Heart right ventricle (tissue), 16 donors: ENCODE measurements at regions of chr6 and their contacts with region 1.

Region 1: DNA sequence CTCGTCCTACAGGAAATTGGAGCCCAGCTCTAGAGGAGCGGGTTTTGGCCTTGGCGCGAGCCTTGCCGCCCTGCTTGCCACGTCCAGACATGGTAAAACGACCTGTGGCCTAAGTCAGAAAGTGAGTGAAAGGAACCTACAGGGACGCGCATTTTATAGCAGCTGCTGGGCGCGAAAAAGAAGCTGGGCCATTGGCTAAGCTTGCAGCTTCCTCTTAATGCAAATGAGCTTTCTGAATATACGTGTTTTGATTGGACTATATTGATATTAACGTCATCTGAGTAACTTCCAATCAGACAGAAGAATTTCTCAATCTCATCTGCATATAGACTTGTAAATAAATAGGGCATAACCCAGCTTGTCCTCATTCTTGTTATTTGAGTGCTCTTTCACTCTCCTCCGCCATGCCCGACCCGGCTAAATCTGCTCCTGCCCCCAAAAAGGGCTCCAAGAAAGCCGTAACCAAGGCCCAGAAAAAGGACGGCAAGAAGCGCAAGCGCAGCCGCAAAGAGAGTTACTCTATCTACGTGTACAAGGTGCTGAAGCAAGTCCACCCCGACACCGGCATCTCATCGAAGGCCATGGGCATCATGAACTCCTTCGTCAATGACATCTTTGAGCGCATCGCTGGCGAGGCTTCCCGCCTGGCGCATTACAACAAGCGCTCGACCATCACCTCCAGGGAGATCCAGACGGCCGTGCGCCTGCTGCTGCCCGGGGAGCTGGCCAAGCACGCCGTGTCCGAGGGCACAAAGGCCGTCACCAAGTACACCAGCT is 18.9 kb downstream of the OR2B2 start:
- DNase-seq: peak; percentile 56 to 77
- ATAC-seq: peak; percentile 39 to 69 (median 52)
- H3K4me3 ChIP-seq: peak overlapping the region; percentile 26 to 93 (median 64)
- H3K27ac ChIP-seq: peak overlapping the region in 7 of 10 donors; percentile 17 to 92 (median 38)
- H3K4me1 ChIP-seq: peaks cover 0 to 49% (median 28%) of the 10 kb centered on the region in 9 donors
- H3K27me3 ChIP-seq: peaks cover 0 to 48% (median 45%) of the 10 kb centered on the region in 7 donors
- CTCF ChIP-seq: no peak

Region 2: DNA sequence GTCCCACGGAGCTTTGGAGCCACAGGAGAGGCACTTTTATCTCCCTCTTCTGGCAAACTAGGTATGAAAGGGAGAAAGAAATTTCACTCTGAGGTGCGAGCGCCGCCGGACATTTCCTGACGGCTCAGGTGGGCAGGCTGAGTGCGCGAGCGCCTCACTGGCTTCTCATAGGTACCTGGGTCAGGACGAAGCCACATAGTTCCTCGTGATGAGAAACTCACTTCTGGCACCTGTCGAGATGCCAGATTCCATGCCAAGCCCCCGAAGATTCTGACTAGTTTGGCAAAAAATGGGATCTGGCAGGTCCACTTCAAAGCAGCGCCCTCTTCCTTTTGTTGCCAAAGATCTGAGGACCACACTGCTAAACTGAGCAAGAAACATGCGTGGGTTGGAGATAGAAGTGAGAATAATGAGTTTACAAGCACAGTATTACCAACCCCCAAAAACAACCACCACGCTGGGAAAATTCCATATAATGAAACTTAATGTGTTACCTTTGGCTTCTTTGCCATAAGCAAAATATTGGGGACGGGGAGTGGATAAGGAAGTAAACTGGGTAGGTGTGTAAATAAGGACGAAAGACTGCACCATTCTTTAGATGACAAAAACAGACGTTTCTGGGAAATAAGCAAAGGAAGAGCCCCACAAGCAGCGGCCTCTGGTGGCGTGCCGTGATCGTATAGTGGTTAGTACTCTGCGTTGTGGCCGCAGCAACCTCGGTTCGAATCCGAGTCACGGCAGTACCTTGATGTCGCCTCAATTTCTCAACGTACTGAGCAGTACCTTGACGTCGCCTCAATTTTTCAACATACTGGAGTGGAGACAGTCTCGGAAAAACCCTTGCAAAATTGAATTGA is 735.6 kb before region 1 on chr6:
- intact Hi-C with region 1: loop called in 2 of 10 experiments (anchors 10 kb)
- DNase-seq: peak; percentile 62 to 65
- ATAC-seq: peak in 7 of 8 donors; percentile 64 to 92 (median 80)
- H3K4me3 ChIP-seq: peak overlapping the region; percentile 5 to 54 (median 44)
- H3K27ac ChIP-seq: peak overlapping the region in 1 of 10 donors; percentile 11
- H3K4me1 ChIP-seq: peaks cover 0 to 17% (median 9%) of the 10 kb centered on the region in 9 donors
- H3K27me3 ChIP-seq: peaks cover 0 to 18% (median 0%) of the 10 kb centered on the region in 7 donors
- CTCF ChIP-seq: peak in 8 of 9 donors; percentile 7 to 75 (median 60)

Region 3: GRCh38 chr6:27472617-27473400 is 420.4 kb before region 1 on chr6 and contains the start of gene ZNF184:
- intact Hi-C with region 1: loop called in 5 of 10 experiments (anchors 2 to 10 kb)
- DNase-seq: peak; percentile 95 to 96
- ATAC-seq: peak; percentile 99 to 100 (median 100)
- H3K4me3 ChIP-seq: peak within 1 kb of the TSS; percentile 51 to 97 (median 80)
- H3K27ac ChIP-seq: peak within 1 kb of the TSS in 9 of 10 donors; percentile 81 to 93 (median 90)
- H3K4me1 ChIP-seq: peaks cover under 1 to 31% (median 17%) of the 10 kb centered on the region in 9 donors
- H3K27me3 ChIP-seq: no peaks in the 10 kb centered on the region
- CTCF ChIP-seq: peak in 3 of 9 donors; percentile 7 to 30 (median 17)
- total RNA-seq, gene ZNF184: 2.1 to 5.5 (median 3.4) TPM

Region 4: DNA sequence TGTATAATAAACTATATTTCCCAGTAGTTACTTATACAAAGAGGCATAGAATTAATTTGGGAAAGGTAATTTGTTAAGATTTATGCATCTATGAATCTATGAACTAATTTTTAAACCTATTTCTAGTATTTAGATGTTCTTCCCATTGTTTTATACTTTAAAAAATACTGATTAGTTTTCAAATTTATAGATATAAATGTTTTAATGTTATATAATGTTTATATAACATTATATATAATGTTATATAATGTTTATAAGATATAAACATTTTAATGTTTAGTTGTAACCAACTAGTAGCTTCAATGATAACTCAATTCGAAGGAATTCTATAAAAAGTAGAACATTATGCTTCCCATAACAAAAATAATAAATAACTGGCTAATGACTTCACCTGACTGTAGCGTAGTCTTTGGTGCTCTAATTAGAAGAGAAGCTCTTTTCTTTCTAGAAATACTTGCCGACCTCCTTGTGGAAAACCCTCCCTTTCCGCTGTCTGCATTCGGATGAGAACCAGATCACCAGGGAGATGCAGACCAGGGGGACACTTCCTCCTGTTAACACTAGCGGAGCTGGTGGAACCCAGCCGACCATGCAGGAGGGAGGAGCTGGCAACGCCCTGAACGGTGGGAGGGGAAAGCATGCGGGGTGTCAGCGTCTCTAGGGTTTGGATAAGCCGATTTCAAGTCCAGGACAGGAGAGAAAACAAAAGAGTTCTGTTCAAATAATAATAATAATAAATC is 139.4 kb before region 1 on chr6:
- intact Hi-C with region 1: loop called in 1 of 10 experiments (anchors 5 kb)
- DNase-seq: peak; percentile 52 to 53
- ATAC-seq: peak in 3 of 8 donors; percentile 40 to 71 (median 65)
- H3K4me3 ChIP-seq: peak overlapping the region in 9 of 10 donors; percentile 34 to 86 (median 71)
- H3K27ac ChIP-seq: no peak overlapping the region
- H3K4me1 ChIP-seq: peaks cover 0 to 17% (median 5%) of the 10 kb centered on the region in 9 donors
- H3K27me3 ChIP-seq: peaks cover 6 to 39% (median 32%) of the 10 kb centered on the region in 7 donors
- CTCF ChIP-seq: no peak

Region 5: DNA sequence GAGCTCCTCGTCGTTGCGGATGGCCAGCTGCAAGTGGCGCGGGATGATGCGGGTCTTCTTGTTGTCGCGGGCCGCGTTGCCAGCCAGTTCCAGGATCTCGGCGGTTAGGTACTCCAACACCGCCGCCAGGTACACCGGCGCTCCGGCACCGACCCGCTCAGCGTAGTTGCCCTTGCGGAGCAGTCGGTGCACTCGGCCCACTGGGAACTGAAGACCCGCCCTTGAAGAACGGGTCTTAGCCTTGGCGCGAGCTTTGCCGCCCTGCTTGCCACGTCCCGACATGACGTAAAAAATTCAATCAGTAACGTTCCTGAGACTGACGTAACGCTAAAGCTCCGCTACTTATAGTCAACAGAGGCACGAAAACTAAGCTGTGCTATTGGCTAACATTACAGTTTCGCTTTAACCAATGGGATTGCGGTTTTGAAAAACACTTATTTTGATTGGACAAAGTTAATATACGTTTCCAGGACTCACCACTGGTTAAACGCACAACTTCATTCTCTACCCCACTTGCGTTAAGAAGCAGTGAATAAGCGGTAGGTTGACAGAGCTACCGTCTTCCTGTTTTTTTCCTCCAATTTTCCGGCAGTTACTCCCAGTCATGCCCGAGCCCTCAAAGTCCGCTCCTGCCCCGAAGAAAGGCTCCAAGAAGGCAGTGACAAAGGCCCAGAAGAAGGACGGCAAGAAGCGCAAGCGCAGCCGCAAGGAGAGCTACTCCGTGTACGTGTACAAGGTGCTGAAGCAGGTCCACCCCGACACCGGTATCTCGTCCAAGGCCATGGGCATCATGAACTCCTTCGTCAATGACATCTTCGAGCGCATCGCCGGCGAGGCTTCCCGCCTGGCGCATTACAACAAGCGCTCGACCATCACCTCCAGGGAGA is 54.9 kb before region 1 on chr6:
- intact Hi-C with region 1: loop called in 5 of 10 experiments (anchors 2 to 5 kb)
- DNase-seq: peak; percentile 61 to 80
- ATAC-seq: peak; percentile 92 to 96 (median 95)
- H3K4me3 ChIP-seq: peak overlapping the region; percentile 61 to 95 (median 82)
- H3K27ac ChIP-seq: peak overlapping the region; percentile 86 to 98 (median 96)
- H3K4me1 ChIP-seq: peaks cover 0 to 39% (median 31%) of the 10 kb centered on the region in 9 donors
- H3K27me3 ChIP-seq: no peaks in the 10 kb centered on the region
- CTCF ChIP-seq: peak in 2 of 9 donors; percentile 7 to 8

Region 6: DNA sequence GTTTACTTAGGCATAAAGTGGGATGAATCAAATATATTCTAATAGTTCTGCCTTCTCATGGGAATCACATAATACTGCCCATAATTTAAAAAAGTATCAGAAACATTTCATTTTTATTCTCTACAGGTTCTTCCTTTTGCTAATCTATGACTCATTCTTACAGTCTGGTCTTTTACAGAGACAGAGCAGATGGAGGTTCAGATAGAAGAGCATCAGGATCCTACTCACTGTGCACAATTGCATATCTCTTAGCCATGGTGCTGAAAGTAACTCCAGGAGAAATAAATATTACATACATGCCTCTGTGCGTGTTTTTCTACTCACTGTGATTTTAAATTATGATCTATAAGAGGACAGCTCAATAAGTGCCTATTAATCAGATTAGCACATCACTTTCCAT is 47.5 kb after region 1 on chr6:
- intact Hi-C with region 1: no loop called
- DNase-seq: no peak
- ATAC-seq: no peak
- H3K4me3 ChIP-seq: no peak overlapping the region
- H3K27ac ChIP-seq: no peak overlapping the region
- H3K4me1 ChIP-seq: no peaks in the 10 kb centered on the region
- H3K27me3 ChIP-seq: peaks cover 0 to 30% (median 14%) of the 10 kb centered on the region in 7 donors
- CTCF ChIP-seq: no peak

Region 7: GRCh38 chr6:28068067-28068466 is 174.8 kb after region 1 on chr6:
- intact Hi-C with region 1: no loop called
- DNase-seq: no peak
- ATAC-seq: no peak
- H3K4me3 ChIP-seq: no peak overlapping the region
- H3K27ac ChIP-seq: no peak overlapping the region
- H3K4me1 ChIP-seq: no peaks in the 10 kb centered on the region
- H3K27me3 ChIP-seq: peaks cover 0 to 62% (median 21%) of the 10 kb centered on the region in 7 donors
- CTCF ChIP-seq: no peak

Region 8: DNA sequence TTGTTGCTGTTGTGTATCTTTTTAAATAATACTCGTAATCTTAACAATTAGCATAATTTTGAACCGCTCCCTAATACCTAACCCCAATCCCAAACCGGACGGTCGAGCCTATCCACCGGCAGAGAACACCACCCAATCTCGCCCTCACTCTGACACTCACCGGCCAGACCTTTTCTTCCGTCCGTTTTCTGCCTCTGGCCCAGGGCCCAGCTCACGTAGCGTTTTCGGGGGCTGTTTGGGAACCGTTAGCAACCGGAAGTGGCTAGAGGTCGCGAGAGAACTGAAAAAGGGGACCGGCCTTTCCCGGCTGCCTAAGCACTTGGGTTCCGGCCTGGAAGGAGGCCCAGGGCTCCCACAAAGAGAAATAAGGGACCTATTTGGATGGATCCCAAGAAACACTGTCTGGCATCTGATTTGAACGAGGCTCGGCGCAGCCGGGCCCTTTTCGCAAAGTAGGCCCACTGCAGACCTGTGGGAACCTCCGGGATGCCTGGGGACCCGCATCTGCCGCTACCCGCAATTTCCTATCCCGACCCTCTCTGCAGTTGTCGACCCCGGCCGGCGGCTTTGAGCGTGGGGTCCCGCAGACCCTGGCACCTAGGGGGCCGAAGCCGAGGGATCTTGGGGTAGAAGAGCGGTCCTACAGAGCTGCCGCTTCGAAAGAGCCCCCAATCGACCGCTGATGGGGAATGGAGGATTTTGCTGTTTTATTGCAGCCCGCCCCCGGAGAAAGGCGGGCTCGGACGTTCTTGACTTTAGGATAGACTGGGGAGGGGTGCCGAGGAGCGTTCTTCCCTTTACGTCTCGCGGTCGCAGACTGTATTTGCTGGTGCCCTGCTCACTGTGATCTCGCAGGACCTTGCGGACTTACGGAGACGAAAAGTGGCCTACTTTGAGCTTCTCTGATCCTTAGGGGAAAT is 243.6 kb after region 1 on chr6:
- intact Hi-C with region 1: no loop called
- DNase-seq: peak; percentile 88 to 94
- ATAC-seq: peak; percentile 92 to 96 (median 93)
- H3K4me3 ChIP-seq: peak overlapping the region; percentile 69 to 93 (median 78)
- H3K27ac ChIP-seq: peak overlapping the region; percentile 81 to 97 (median 94)
- H3K4me1 ChIP-seq: peaks cover 0 to 58% (median 24%) of the 10 kb centered on the region in 9 donors
- H3K27me3 ChIP-seq: no peaks in the 10 kb centered on the region
- CTCF ChIP-seq: no peak